Heart right ventricle (tissue), 16 donors: ENCODE measurements at regions of chr3 and their contacts with region 1.

Region 1: DNA sequence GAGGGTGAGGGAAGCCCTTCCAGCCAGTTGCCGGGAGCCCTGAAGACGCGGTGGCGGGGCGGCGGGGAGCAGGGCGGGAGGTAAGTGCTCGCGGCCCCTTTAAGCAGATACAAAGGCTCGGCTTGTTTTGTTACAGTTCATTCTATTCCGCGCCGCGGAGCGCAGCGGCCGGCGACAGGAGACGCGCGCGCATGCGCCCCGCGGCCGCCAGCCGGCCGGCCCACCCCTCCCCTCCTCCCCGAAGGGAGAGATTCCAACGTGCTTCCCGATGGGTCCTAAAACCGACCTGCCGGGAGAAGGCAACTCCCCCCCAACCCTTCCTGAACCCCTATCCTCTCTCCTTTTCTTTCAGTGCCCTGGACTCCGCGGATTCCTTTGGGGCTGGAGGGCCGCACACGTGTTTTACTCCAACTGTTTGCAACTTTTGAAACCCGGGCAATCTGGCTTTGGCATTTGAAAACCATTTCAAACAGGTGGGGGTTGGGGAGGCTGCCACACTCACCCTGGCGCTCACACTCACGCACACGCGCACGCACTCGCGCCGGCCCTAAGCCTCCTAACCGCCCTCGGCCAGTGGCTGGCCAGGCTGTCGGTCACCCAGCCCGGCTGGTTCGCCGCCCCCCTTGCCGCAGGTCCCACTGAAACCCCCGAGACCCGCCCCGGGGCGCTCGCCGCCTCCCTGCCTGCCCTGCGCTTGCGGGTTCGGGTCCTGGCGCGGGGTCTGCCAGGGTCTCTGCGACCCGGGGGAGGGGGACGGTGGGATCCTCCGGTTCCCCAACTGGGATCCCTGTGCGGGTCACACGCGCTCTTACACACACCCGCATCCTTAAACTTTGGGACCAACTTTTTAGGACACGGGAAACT is at the start of gene MAGI1:
- DNase-seq: peak; percentile 89 to 94
- ATAC-seq: peak; percentile 87 to 93 (median 90)
- H3K4me3 ChIP-seq: peak within 1 kb of the TSS; percentile 58 to 96 (median 80)
- H3K27ac ChIP-seq: peak within 1 kb of the TSS; percentile 76 to 98 (median 94)
- H3K4me1 ChIP-seq: peaks cover 2 to 40% (median 22%) of the 10 kb centered on the region in 9 donors
- H3K27me3 ChIP-seq: peaks cover 0 to 51% (median 0%) of the 10 kb centered on the region in 7 donors
- CTCF ChIP-seq: no peak
- total RNA-seq, gene MAGI1: 19.4 to 58.2 (median 43.6) TPM

Region 2: GRCh38 chr3:65871305-65872141 is 167.4 kb before region 1 on chr3:
- intact Hi-C with region 1: loop called in 1 of 10 experiments (anchors 5 kb)
- DNase-seq: peak; percentile 42 to 62
- ATAC-seq: peak in 6 of 8 donors; percentile 46 to 69 (median 56)
- H3K4me3 ChIP-seq: no peak overlapping the region
- H3K27ac ChIP-seq: peak overlapping the region in 1 of 10 donors; percentile 21
- H3K4me1 ChIP-seq: peaks cover 0 to 47% (median 13%) of the 10 kb centered on the region in 9 donors
- H3K27me3 ChIP-seq: no peaks in the 10 kb centered on the region
- CTCF ChIP-seq: no peak

Region 3: DNA sequence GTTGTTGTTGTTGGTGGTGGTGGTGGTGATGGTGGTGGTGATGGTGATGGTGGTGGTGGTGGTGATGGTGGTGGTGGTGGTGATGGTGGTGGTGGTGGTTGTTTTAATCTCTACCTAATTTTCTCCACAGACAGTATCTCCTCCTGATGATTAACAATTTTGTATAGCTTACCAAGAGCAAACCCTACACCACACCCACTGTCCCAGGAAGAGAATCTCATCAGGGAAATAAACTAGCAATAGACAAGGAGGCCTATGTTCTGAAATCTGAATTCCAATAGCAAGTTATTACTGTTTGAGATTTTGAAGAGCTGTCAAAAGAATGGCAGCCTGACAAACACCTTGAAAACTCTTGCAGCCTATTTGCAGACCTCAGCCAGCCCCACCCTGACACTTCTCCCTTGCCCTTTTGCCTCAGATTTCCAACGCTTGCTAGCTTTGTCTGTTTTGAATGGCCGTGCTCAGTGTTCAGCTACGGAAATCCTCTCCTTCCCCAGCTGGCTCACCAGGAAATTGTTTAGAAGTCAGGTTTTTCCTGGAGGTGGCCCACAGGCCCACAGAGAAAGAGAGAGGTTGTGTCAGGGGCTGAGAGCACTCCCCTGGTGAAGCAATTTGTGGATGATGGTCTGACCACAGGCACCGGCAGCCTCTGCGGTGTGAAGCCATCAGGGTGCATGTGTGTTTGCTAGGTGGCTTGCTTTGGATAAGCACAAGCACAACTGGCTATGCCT is 101.9 kb before region 1 on chr3:
- intact Hi-C with region 1: loop called in 1 of 10 experiments (anchors 5 kb)
- DNase-seq: peak in 1 of 2 donors; percentile 43
- ATAC-seq: peak; percentile 30 to 79 (median 68)
- H3K4me3 ChIP-seq: no peak overlapping the region
- H3K27ac ChIP-seq: peak overlapping the region in 9 of 10 donors; percentile 12 to 76 (median 50)
- H3K4me1 ChIP-seq: peaks cover 0 to 63% (median 49%) of the 10 kb centered on the region in 9 donors
- H3K27me3 ChIP-seq: no peaks in the 10 kb centered on the region
- CTCF ChIP-seq: no peak

Region 4: GRCh38 chr3:65963787-65964677 is 74.9 kb before region 1 on chr3:
- intact Hi-C with region 1: loop called in 1 of 10 experiments (anchors 10 kb)
- DNase-seq: no peak
- ATAC-seq: peak in 4 of 8 donors; percentile 35 to 66 (median 48)
- H3K4me3 ChIP-seq: no peak overlapping the region
- H3K27ac ChIP-seq: peak overlapping the region in 4 of 10 donors; percentile 1 to 65 (median 48)
- H3K4me1 ChIP-seq: peaks cover 5 to 78% (median 41%) of the 10 kb centered on the region in 9 donors
- H3K27me3 ChIP-seq: no peaks in the 10 kb centered on the region
- CTCF ChIP-seq: no peak

Region 5: GRCh38 chr3:65996589-65996988 is 42.4 kb before region 1 on chr3:
- intact Hi-C with region 1: loop called in 1 of 10 experiments (anchors 5 kb)
- DNase-seq: peak in 1 of 2 donors; percentile 17
- ATAC-seq: peak in 5 of 8 donors; percentile 42 to 58 (median 47)
- H3K4me3 ChIP-seq: peak overlapping the region in 1 of 10 donors; percentile 3
- H3K27ac ChIP-seq: peak overlapping the region in 3 of 10 donors; percentile 6 to 25 (median 13)
- H3K4me1 ChIP-seq: peaks cover 3 to 74% (median 42%) of the 10 kb centered on the region in 9 donors
- H3K27me3 ChIP-seq: no peaks in the 10 kb centered on the region
- CTCF ChIP-seq: no peak

Region 6: DNA sequence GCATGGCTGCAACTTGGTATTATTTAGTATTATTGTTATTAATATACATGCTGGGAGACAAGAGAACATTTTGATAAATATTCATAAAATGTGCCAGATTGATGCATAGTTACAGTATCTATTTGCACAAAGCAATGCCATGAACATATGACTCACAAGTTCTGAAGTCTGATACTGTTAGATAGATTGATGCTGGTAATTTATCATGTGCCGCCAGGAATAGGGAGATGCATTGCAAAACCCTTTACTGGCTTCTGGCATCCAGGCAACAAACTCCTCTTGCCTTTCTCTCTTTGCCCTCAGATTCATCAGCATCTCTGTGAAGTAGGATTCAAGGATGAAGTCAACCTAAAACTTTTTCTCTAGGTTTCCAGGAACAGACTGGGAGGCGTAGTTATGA is 140.8 kb after region 1 on chr3:
- intact Hi-C with region 1: loop called in 2 of 10 experiments (anchors 5 to 10 kb)
- DNase-seq: no peak
- ATAC-seq: no peak
- H3K4me3 ChIP-seq: no peak overlapping the region
- H3K27ac ChIP-seq: peak overlapping the region in 7 of 10 donors; percentile 61 to 90 (median 85)
- H3K4me1 ChIP-seq: peaks cover 3 to 50% (median 15%) of the 10 kb centered on the region in 9 donors
- H3K27me3 ChIP-seq: no peaks in the 10 kb centered on the region
- CTCF ChIP-seq: no peak